ENCODE measurements at regions of chr1 and their contacts with region 1.

Region 1: DNA sequence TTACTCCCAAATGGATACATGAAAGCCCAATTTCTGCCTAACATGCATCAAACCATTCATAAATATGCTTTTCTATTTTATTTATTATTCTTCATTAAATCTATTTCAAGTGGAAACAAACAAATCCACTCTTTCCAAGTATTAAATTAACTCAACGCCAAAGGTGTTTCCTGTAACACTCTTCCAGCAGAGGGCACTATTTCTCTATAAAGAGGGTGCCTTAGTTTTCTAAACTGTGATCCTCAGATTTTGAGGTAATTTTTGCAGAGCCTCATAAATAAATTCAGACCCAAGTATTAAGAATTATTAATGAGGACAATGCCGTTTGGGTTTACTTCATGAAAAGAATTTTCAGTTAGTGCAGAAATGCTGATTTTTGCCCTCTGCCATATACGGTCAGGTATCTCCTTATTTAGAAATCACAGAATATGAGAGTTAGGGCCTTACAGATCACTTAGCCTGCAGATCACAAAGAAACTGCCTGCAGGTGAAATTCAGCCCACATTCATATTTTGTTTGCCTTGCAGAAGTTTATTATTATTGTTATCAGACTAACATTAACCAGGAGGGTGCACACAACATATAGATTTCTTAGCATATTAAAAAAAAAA is 40.1 kb upstream of the MYSM1 start:
- DNase-seq: peak in 1 of 2 donors; percentile 81
- ATAC-seq: peak; percentile 57 to 69 (median 58)
- H3K4me3 ChIP-seq: no peak overlapping the region
- H3K4me3 Mint-ChIP-seq: no peak overlapping the region
- H3K27ac ChIP-seq: no peak overlapping the region
- H3K27ac Mint-ChIP-seq: no peak overlapping the region
- H3K4me1 ChIP-seq: no peaks in the 10 kb centered on the region
- H3K4me1 Mint-ChIP-seq: peaks cover 9 to 25% of the 10 kb centered on the region in 2 donors
- H3K27me3 ChIP-seq: no peaks in the 10 kb centered on the region
- H3K27me3 Mint-ChIP-seq: no peaks in the 10 kb centered on the region
- CTCF ChIP-seq: peak; percentile 94

Region 2: DNA sequence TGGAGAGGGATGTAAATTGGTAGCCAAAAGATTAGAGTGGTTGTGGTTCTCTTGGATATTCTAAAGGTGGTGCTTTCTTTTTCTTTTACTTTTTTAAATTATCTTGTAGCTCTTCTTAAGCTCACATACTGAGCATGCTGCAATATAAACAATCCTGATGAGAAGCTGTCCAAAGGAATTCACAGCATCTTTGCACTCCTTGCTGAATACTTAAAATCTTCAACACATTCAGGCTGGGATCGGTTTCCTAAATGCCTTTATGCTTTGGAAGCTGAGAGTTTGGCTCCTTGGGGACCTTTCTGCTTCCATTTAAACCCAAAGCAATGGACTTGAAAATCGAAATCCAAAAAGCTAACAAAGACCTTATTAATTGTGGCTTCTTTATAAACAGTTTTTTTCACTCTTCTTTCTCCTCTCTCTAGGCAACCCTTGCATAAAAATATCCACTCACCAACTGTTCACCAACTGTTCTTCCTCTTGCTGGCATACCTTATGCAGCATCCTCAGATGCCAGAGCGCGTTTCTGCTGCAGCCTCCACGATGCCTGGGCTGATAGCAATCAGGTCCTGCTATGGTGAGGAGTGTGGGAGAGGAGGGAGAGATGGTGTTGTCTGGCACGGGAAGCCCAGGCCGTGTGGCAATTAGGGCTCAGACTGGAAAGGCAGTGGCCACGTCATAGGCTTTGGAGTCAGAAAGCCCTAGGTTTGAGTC is 780.3 kb before region 1 on chr1:
- intact Hi-C with region 1: no loop called
- DNase-seq: no peak
- ATAC-seq: no peak
- H3K4me3 ChIP-seq: no peak overlapping the region
- H3K4me3 Mint-ChIP-seq: no peak overlapping the region
- H3K27ac ChIP-seq: no peak overlapping the region
- H3K27ac Mint-ChIP-seq: no peak overlapping the region
- H3K4me1 ChIP-seq: no peaks in the 10 kb centered on the region
- H3K4me1 Mint-ChIP-seq: no peaks in the 10 kb centered on the region
- H3K27me3 ChIP-seq: no peaks in the 10 kb centered on the region
- H3K27me3 Mint-ChIP-seq: no peaks in the 10 kb centered on the region
- CTCF ChIP-seq: no peak

Region 3: GRCh38 chr1:58768971-58769808 is 29.2 kb after region 1 on chr1:
- intact Hi-C with region 1: loop called (anchors 1 kb)
- DNase-seq: peak; percentile 47 to 66
- ATAC-seq: peak in 1 of 3 donors; percentile 34
- H3K4me3 ChIP-seq: no peak overlapping the region
- H3K4me3 Mint-ChIP-seq: no peak overlapping the region
- H3K27ac ChIP-seq: no peak overlapping the region
- H3K27ac Mint-ChIP-seq: no peak overlapping the region
- H3K4me1 ChIP-seq: peaks cover 9% of the 10 kb centered on the region
- H3K4me1 Mint-ChIP-seq: peaks cover 28% of the 10 kb centered on the region in 2 donors
- H3K27me3 ChIP-seq: no peaks in the 10 kb centered on the region
- H3K27me3 Mint-ChIP-seq: peaks cover 0 to 6% of the 10 kb centered on the region in 2 donors
- CTCF ChIP-seq: peak; percentile 90

Region 4: DNA sequence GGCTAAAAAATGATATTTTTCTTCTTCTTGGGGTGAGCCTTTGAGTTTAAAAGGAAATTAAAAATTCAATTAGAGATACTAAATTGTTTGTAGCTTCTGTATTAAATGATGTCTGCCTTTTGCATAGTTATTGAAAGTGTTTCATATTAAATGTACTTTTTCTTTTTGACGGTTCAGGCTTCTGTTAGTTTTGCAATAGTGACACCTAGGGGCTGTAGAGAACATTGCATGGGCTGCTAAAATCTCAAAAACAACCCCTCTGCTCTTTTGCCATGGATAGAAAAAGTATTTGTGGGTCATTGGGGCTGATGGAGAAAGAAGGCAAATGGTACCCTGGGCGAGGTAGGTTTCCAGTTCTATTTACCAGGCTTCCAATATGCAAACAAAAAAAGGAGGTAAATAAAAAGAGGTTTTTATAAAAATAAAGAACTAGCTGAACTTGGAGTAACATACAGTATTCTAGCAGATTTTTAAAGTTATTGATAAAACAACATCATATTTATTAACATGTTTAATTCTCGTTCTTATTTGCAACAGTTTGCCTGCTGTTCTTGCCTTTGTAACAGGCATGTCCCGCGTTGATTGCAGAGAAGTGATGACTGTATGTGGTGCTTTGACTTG is 959.4 kb after region 1 on chr1:
- intact Hi-C with region 1: loop called (anchors 1 kb)
- DNase-seq: peak in 1 of 2 donors; percentile 74
- ATAC-seq: peak; percentile 68 to 78 (median 76)
- H3K4me3 ChIP-seq: no peak overlapping the region
- H3K4me3 Mint-ChIP-seq: peak overlapping the region; percentile 43
- H3K27ac ChIP-seq: no peak overlapping the region
- H3K27ac Mint-ChIP-seq: no peak overlapping the region
- H3K4me1 ChIP-seq: peaks cover 5% of the 10 kb centered on the region
- H3K4me1 Mint-ChIP-seq: peaks cover 20 to 23% of the 10 kb centered on the region in 2 donors
- H3K27me3 ChIP-seq: no peaks in the 10 kb centered on the region
- H3K27me3 Mint-ChIP-seq: no peaks in the 10 kb centered on the region
- CTCF ChIP-seq: peak; percentile 100

Region 5: GRCh38 chr1:59947047-59947938 is 1207.3 kb after region 1 on chr1:
- intact Hi-C with region 1: loop called (anchors 5 kb)
- DNase-seq: peak in 1 of 2 donors; percentile 79
- ATAC-seq: peak; percentile 62 to 94 (median 75)
- H3K4me3 ChIP-seq: no peak overlapping the region
- H3K4me3 Mint-ChIP-seq: no peak overlapping the region
- H3K27ac ChIP-seq: no peak overlapping the region
- H3K27ac Mint-ChIP-seq: no peak overlapping the region
- H3K4me1 ChIP-seq: no peaks in the 10 kb centered on the region
- H3K4me1 Mint-ChIP-seq: no peaks in the 10 kb centered on the region
- H3K27me3 ChIP-seq: peaks cover 4% of the 10 kb centered on the region
- H3K27me3 Mint-ChIP-seq: peaks cover 13 to 17% of the 10 kb centered on the region in 2 donors
- CTCF ChIP-seq: peak; percentile 78

Measured in natural killer cell (primary cell).